Sigmoid colon (tissue), 7 donors: ENCODE measurements at regions of chr3 and their contacts with region 1.

Region 1: DNA sequence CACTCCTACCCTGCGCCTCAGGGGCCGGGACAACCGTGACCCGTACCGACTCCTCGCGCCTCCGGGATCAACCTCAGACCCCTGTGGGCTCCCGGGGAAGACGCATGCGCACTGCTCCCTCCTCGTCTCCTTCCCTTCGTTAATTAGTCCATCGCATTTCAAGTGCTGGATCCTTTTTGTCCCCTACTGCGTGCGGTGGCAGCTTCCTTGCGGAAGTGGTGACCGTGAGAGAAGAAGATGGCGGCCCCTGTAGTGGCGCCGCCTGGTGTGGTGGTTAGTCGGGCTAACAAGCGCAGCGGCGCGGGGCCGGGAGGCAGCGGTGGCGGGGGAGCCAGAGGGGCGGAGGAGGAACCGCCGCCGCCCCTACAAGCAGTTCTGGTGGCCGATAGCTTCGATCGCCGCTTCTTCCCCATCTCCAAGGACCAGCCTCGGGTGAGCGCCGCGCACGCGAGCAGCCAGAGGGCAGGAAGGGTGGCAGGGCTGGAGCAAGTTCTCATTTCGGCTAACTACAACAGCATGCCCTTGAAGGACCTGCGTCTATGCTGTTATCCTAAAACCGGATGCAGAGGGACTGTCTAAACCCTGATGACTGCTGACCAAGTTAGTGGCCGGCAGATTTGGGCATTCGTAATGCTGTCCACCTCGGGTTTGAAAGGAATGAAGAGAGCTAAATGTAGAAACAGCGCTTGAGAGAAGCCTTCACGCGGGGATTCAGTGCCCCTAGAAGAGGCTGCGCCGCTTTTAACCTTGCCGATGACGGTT is at the start of gene EIF2B5:
- DNase-seq: peak; percentile 94
- H3K4me3 ChIP-seq: peak within 1 kb of the TSS; percentile 79 to 90 (median 85)
- H3K27ac ChIP-seq: peak within 1 kb of the TSS; percentile 87 to 90 (median 90)
- H3K4me1 ChIP-seq: peaks cover 0 to 32% (median 20%) of the 10 kb centered on the region in 4 donors
- H3K27me3 ChIP-seq: no peaks in the 10 kb centered on the region
- CTCF ChIP-seq: peak in 1 of 4 experiments; percentile 26
- EP300 ChIP-seq: peak in 1 of 4 donors; percentile 5
- POLR2A ChIP-seq: peak in 1 of 2 donors; percentile 58
- total RNA-seq, gene EIF2B5: 26.0 to 43.5 (median 31.3) TPM

Region 2: GRCh38 chr3:183895296-183895695 is 240.0 kb before region 1 on chr3:
- intact Hi-C with region 1: loop called (anchors 5 kb)
- DNase-seq: no peak
- H3K4me3 ChIP-seq: no peak overlapping the region
- H3K27ac ChIP-seq: no peak overlapping the region
- H3K4me1 ChIP-seq: peaks cover 0 to 5% (median 0%) of the 10 kb centered on the region in 4 donors
- H3K27me3 ChIP-seq: peaks cover 0 to 22% (median 0%) of the 10 kb centered on the region in 3 donors
- CTCF ChIP-seq: peak; percentile 52 to 60 (median 58)
- EP300 ChIP-seq: no peak
- POLR2A ChIP-seq: no peak

Region 3: DNA sequence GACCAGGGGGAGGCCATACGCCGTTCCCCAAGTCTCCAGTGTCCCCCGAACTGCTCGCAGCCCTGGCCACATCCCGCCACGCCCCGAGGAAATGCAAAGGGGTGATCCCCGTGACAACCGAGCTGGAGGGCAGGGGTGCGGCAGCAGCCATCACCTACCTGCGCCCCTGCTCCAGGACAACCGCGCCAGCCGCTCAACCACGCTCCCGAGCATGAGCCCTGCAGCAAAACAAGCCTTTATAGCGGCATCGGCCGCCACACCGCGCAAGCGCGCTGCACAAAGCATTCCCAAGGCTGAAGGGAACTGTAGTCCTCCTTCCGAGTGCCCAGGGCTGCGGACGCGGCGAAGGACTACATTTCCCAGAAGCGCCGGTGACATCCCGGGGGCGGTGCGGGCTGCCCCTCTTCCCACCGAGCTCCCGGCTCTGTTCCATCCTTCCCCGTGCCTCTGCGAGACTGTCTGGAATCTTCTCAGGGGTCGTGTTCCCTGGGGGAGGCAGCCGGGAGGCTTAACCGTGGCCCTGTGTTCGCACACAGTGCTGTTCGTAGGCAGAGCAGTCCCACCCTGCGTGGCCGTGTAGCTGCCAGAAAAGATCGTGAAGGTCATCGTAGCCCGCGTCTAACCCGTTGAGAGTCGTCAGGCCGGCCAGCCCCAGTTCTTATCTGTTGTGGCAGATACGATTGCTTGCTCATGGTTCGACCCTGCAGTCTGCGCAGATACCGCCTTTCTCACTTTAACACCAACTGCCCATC is 117.5 kb before region 1 on chr3 and contains the start of gene ABCC5:
- intact Hi-C with region 1: loop called (anchors 2 kb)
- DNase-seq: peak; percentile 97
- H3K4me3 ChIP-seq: peak within 1 kb of the TSS; percentile 78 to 98 (median 88)
- H3K27ac ChIP-seq: peak within 1 kb of the TSS; percentile 83 to 85 (median 85)
- H3K4me1 ChIP-seq: peaks cover 0 to 27% (median 12%) of the 10 kb centered on the region in 4 donors
- H3K27me3 ChIP-seq: no peaks in the 10 kb centered on the region
- CTCF ChIP-seq: peak in 3 of 4 experiments; percentile 67 to 91 (median 76)
- EP300 ChIP-seq: no peak
- POLR2A ChIP-seq: no peak
- total RNA-seq, gene ABCC5: 16.0 to 39.6 (median 21.0) TPM

Region 4: GRCh38 chr3:184154885-184155643 is 19.7 kb after region 1 on chr3 and contains the start of gene DVL3:
- intact Hi-C with region 1: loop called (anchors 2 kb)
- DNase-seq: peak; percentile 81
- H3K4me3 ChIP-seq: peak within 1 kb of the TSS; percentile 67 to 94 (median 80)
- H3K27ac ChIP-seq: peak within 1 kb of the TSS; percentile 91 to 97 (median 94)
- H3K4me1 ChIP-seq: peaks cover 0 to 52% (median 47%) of the 10 kb centered on the region in 4 donors
- H3K27me3 ChIP-seq: no peaks in the 10 kb centered on the region
- CTCF ChIP-seq: no peak
- EP300 ChIP-seq: no peak
- POLR2A ChIP-seq: no peak
- total RNA-seq, gene DVL3: 38.5 to 71.2 (median 53.9) TPM

Region 5: DNA sequence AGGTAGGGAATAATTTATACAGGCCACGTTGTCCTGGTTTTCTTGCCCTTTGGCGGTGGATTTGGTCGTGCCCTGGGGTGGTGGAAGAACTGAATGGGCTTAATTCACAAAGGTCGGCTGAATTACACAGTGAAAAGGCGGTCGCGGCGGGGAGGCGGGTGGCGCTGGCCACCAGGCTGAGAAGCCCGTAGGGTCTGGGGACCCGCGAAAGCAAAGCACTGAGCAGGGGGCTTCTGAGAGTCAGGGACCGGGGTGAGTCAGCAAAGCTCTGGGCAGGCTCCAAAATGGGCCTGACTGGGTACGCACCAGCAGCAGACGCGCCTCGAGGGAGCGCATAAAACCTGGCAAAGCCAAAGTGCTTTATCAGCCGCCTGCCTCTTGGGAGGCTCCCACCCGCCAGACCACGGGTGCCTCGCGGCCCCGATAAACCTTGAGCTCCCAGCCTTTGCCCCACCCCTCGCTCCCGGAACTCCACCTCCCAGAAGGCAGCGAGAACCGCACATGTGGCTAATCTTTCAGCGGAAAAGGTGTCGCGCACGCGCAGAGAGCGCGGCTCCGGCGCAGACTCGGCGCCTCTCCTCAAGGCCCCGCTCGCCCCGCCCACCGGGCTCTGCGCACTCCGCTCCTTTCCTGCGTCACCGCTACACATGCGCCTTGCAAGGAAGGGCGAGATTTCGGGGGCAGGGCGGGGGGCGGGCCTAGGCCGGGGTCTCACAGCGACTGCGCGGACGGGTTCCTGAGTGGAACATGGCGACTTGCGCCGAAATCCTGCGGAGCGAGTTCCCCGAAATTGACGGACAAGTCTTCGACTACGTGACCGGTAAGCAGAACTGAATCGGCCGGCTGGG is 50.4 kb after region 1 on chr3 and contains the start of gene ABCF3:
- intact Hi-C with region 1: loop called (anchors 2 kb)
- DNase-seq: peak; percentile 100
- H3K4me3 ChIP-seq: peak within 1 kb of the TSS; percentile 71 to 98 (median 96)
- H3K27ac ChIP-seq: peak within 1 kb of the TSS; percentile 87 to 90 (median 88)
- H3K4me1 ChIP-seq: peaks cover 0 to 37% (median 29%) of the 10 kb centered on the region in 4 donors
- H3K27me3 ChIP-seq: no peaks in the 10 kb centered on the region
- CTCF ChIP-seq: no peak
- EP300 ChIP-seq: peak in 1 of 4 donors; percentile 48
- POLR2A ChIP-seq: peak; percentile 62 to 84
- total RNA-seq, gene ABCF3: 32.4 to 51.3 (median 39.2) TPM

Region 6: GRCh38 chr3:184250167-184250828 is 115.0 kb after region 1 on chr3:
- intact Hi-C with region 1: loop called (anchors 1 kb)
- DNase-seq: peak; percentile 88
- H3K4me3 ChIP-seq: peak overlapping the region; percentile 71 to 88 (median 81)
- H3K27ac ChIP-seq: peak overlapping the region; percentile 61 to 86 (median 84)
- H3K4me1 ChIP-seq: peaks cover 0 to 28% (median 15%) of the 10 kb centered on the region in 4 donors
- H3K27me3 ChIP-seq: no peaks in the 10 kb centered on the region
- CTCF ChIP-seq: peak; percentile 42 to 93 (median 86)
- EP300 ChIP-seq: no peak
- POLR2A ChIP-seq: no peak

Region 7: GRCh38 chr3:184395320-184395660 is 260.0 kb after region 1 on chr3:
- intact Hi-C with region 1: no loop called
- DNase-seq: peak; percentile 67
- H3K4me3 ChIP-seq: no peak overlapping the region
- H3K27ac ChIP-seq: no peak overlapping the region
- H3K4me1 ChIP-seq: no peaks in the 10 kb centered on the region
- H3K27me3 ChIP-seq: no peaks in the 10 kb centered on the region
- CTCF ChIP-seq: no peak
- EP300 ChIP-seq: no peak
- POLR2A ChIP-seq: no peak